GM18951 (cell line): ENCODE measurements at regions of chr3 and their contacts with region 1.

Region 1: GRCh38 chr3:183460081-183461055 is 31.9 kb upstream of the MCF2L2 start:
- POLR2A ChIP-seq: no peak

Region 2: DNA sequence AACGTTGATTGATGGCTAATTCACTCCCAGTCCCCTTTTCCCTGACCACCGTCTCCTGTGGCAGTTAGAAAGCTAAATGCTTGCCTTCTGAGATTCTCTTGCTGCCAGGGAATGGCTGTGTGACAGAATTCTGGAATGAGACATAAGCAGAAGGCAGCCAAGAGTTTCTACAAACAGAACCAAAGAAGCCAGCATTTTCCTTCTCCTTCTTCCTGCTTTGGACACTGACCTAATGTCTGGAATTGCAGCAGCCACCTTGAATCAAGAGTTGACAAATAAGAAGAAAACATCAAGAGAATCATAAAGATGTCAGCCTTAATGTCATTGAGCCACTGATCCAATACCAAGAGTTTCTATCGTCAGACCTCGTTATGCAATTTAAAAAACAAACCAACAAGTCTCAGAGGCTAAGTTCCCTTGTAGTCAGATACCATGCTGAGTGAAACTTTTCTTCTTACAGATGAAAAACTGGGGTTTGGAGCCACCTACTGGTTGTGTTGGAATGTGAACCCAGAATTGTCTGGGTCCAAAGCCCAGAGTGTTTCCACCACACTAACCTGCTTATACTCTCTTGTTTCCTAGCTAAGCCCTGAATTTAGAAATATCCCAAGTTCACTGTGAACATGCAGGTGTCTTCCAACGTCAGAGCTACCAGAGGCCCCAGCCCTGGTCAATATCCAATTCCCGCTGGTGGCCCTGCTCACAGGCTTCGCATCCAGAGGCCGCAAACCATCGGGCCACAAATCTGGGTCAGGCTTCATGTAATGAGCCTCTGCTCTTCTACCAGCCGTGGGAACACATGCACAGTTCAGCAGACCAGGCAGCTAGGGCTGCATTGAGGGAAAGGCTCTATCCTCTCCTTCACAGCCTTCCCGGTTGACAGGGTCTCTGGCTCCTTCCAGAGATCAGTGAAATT is 74.4 kb before region 1 on chr3:
- in situ Hi-C with region 1: no loop called
- POLR2A ChIP-seq: no peak

Region 3: GRCh38 chr3:183548262-183548769 is 87.9 kb after region 1 on chr3:
- in situ Hi-C with region 1: no loop called
- POLR2A ChIP-seq: no peak

Region 4: DNA sequence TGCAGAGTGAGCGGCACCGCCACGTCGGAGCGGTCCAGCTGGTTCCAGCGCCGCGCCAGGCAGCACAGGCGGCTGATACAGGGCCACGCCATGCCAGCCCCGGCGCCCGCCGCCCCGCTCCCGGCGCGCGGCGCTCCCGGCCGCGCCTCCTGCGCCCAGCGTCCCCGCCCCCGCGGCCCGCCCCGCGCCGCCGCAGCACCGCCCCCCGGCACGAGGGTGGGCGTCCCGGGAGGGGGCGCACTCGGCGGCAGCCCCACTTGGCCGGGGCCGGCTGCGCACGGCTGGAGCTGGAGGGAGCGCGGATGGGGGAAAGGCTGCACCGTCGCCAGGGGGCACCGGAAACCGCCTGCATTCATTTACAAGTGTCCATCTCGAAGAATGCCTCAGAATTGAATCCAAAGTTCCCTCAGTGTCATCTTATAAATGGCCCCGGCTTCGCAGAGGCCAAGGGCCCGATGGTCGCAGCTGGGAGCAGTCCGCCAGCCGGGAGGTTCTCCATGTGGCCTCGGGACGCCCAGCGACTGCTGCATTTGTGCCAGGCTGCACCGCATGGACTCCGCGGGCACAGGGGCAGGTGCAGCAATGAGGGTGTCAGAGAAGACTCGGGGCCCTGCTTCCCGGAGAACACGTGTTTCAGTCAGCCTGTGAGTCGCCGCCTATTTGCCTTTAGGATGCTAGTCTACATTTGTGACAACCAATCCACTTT is 365.2 kb after region 1 on chr3 and contains the start of gene MAP6D1:
- in situ Hi-C with region 1: loop called (anchors 10 kb)
- POLR2A ChIP-seq: no peak